ENCODE measurements at regions of chr12 and their contacts with region 1.

Region 1: GRCh38 chr12:6124411-6125309 is at the start of gene VWF:
- DNase-seq: peak in 1 of 3 donors; percentile 46
- ATAC-seq: peak; percentile 76 to 83
- H3K4me3 ChIP-seq: peak within 1 kb of the TSS; percentile 73
- H3K27ac ChIP-seq: peak within 1 kb of the TSS; percentile 79
- H3K4me1 ChIP-seq: no peaks in the 10 kb centered on the region
- H3K27me3 ChIP-seq: no peaks in the 10 kb centered on the region
- total RNA-seq, gene VWF: 144 to 388 (median 269) TPM

Region 2: DNA sequence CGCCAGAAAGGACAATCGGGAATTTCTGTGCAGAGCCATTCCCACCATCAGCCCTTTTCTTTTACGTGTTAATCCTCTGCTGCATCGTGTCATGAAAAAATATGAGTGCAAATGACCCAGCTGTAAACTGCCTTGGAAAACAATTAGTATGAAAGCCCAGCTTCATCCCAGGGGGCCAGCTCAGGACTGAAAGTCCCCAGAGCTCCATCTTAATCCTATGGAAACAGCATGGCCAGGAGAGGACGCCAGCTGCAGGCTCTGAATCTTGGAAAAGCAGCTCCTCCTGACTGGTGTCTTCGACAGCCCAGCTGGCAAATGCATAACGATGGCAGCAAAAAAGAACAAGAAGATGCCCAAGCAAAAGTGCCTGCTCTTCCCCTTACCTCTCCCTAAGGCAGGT is 501.2 kb before region 1 on chr12:
- intact Hi-C with region 1: no loop called
- DNase-seq: no peak
- ATAC-seq: no peak
- H3K4me3 ChIP-seq: no peak overlapping the region
- H3K27ac ChIP-seq: no peak overlapping the region
- H3K4me1 ChIP-seq: peaks cover 7% of the 10 kb centered on the region
- H3K27me3 ChIP-seq: no peaks in the 10 kb centered on the region

Region 3: DNA sequence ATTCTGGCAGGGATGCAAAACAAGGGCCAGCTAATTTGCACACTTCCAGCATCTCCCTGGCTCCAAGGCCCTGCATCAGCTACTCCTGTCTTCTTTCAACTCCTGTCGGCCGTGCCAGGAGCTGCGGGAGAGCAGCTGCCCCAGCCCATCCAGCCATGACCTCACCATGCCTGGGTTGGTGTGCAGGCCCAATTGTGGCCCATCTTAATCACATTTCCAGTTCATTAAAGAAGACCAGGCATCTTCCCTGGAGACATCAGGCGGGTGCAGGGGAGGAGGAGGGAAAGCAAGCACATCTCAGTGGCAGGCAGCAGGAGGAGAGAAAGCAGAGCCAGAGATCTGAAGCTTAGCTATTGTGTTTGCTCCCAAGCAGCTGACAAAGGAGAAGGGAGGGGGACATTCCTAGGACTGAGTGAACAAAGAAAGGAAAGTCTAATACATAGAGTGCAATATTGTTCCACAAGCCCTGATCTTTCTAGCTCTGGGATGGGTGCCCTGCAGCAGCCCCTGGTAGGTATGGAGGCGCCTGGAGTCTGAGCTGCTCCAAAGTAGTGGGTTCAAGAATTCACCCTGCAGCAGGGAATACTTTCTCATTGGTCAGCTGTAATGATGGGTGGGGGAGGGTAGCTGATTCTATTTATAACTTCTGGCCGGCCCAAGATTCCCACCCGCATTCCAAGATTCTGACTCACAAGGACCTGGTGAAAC is 40.2 kb before region 1 on chr12:
- intact Hi-C with region 1: loop called in 1 of 4 experiments (anchors 5 kb)
- DNase-seq: no peak
- ATAC-seq: peak; percentile 8 to 59
- H3K4me3 ChIP-seq: no peak overlapping the region
- H3K27ac ChIP-seq: peak overlapping the region; percentile 51
- H3K4me1 ChIP-seq: peaks cover 8% of the 10 kb centered on the region
- H3K27me3 ChIP-seq: no peaks in the 10 kb centered on the region

Region 4: GRCh38 chr12:6171409-6172015 is 46.9 kb after region 1 on chr12:
- intact Hi-C with region 1: loop called in 1 of 4 experiments (anchors 5 kb)
- DNase-seq: peak; percentile 80 to 88 (median 84)
- ATAC-seq: peak; percentile 90 to 92
- H3K4me3 ChIP-seq: no peak overlapping the region
- H3K27ac ChIP-seq: peak overlapping the region; percentile 73
- H3K4me1 ChIP-seq: peaks cover 11% of the 10 kb centered on the region
- H3K27me3 ChIP-seq: no peaks in the 10 kb centered on the region